HepG2 (cell line): ENCODE measurements at regions of chr14 and their contacts with region 1.

Region 1: GRCh38 chr14:22994762-22995275 is 12.5 kb upstream of the AJUBA start:
- DNase-seq: peak; percentile 67
- ATAC-seq: peak; percentile 94
- H3K4me3 ChIP-seq: no peak overlapping the region
- H3K27ac ChIP-seq: no peak overlapping the region
- H3K4me1 ChIP-seq: peaks cover 5% of the 10 kb centered on the region; the same call in 1 of the 2 replicates
- H3K27me3 ChIP-seq: no peaks in the 10 kb centered on the region
- CTCF ChIP-seq: peak; percentile 90
- EP300 ChIP-seq: no peak
- POLR2A ChIP-seq: no peak
- RAD21 ChIP-seq: peak; percentile 87

Region 2: GRCh38 chr14:22955702-22956569 is 38.9 kb before region 1 on chr14:
- CTCF ChIA-PET with region 1: no interaction called
- POLR2A ChIA-PET with region 1: interaction called, 1,670 read pairs
- in situ Hi-C with region 1: no loop called
- intact Hi-C with region 1: no loop called
- DNase-seq: peak; percentile 48
- ATAC-seq: peak; percentile 27
- H3K4me3 ChIP-seq: peak overlapping the region; percentile 73 to 78 (median 77)
- H3K27ac ChIP-seq: peak overlapping the region; percentile 78
- H3K4me1 ChIP-seq: peaks cover 47% of the 10 kb centered on the region
- H3K27me3 ChIP-seq: no peaks in the 10 kb centered on the region; a peak in 1 of 5 replicates
- CTCF ChIP-seq: no peak
- EP300 ChIP-seq: peak in 1 of 2 experiments; percentile 25; a peak in 1 of 4 replicates
- POLR2A ChIP-seq: no peak
- RAD21 ChIP-seq: no peak

Region 3: GRCh38 chr14:23052182-23052623 is 57.4 kb after region 1 on chr14:
- CTCF ChIA-PET with region 1: interaction called, 173 read pairs
- POLR2A ChIA-PET with region 1: interaction called, 14 read pairs
- in situ Hi-C with region 1: no loop called
- intact Hi-C with region 1: loop called (anchors 1 kb)
- DNase-seq: peak; percentile 65
- ATAC-seq: peak; percentile 62
- H3K4me3 ChIP-seq: no peak overlapping the region
- H3K27ac ChIP-seq: no peak overlapping the region
- H3K4me1 ChIP-seq: peaks cover 25% of the 10 kb centered on the region
- H3K27me3 ChIP-seq: peaks cover 0 to 6% of the 10 kb centered on the region in 2 experiments; a peak in 1 of 5 replicates
- CTCF ChIP-seq: peak; percentile 99
- EP300 ChIP-seq: no peak
- POLR2A ChIP-seq: no peak
- RAD21 ChIP-seq: peak; percentile 97

Region 4: GRCh38 chr14:23057757-23058653 is 63.2 kb after region 1 on chr14:
- CTCF ChIA-PET with region 1: interaction called, 173 read pairs
- POLR2A ChIA-PET with region 1: interaction called, 42 read pairs
- in situ Hi-C with region 1: no loop called
- intact Hi-C with region 1: loop called (anchors 1 kb)
- DNase-seq: peak; percentile 92
- ATAC-seq: peak; percentile 71
- H3K4me3 ChIP-seq: peak overlapping the region; percentile 55 to 88 (median 64)
- H3K27ac ChIP-seq: no peak overlapping the region
- H3K4me1 ChIP-seq: peaks cover 29% of the 10 kb centered on the region
- H3K27me3 ChIP-seq: peaks cover 0 to 6% of the 10 kb centered on the region in 2 experiments; a peak in 1 of 5 replicates
- CTCF ChIP-seq: peak; percentile 100
- EP300 ChIP-seq: peak in 1 of 2 experiments; percentile 66; a peak in 1 of 4 replicates
- POLR2A ChIP-seq: peak in 1 of 2 experiments; percentile 39; a peak in 1 of 4 replicates
- RAD21 ChIP-seq: peak; percentile 98

Region 5: GRCh38 chr14:23186913-23187654 is 192.3 kb after region 1 on chr14:
- CTCF ChIA-PET with region 1: no interaction called
- POLR2A ChIA-PET with region 1: no interaction called
- in situ Hi-C with region 1: no loop called
- intact Hi-C with region 1: no loop called
- DNase-seq: peak; percentile 78
- ATAC-seq: peak; percentile 89
- H3K4me3 ChIP-seq: no peak overlapping the region
- H3K27ac ChIP-seq: no peak overlapping the region
- H3K4me1 ChIP-seq: peaks cover 12% of the 10 kb centered on the region
- H3K27me3 ChIP-seq: peaks cover 2 to 34% of the 10 kb centered on the region in 2 experiments
- CTCF ChIP-seq: peak; percentile 94
- EP300 ChIP-seq: no peak
- POLR2A ChIP-seq: no peak
- RAD21 ChIP-seq: peak; percentile 93